Activated CD4-positive, alpha-beta memory T cell treated with anti-CD3 and anti-CD28 coated beads, Interleukin-2, amount 10 ng/mL, durations not matched to agents 7 days and 5 days (primary cell): ENCODE measurements at regions of chr11 and their contacts with region 1.

Region 1: DNA sequence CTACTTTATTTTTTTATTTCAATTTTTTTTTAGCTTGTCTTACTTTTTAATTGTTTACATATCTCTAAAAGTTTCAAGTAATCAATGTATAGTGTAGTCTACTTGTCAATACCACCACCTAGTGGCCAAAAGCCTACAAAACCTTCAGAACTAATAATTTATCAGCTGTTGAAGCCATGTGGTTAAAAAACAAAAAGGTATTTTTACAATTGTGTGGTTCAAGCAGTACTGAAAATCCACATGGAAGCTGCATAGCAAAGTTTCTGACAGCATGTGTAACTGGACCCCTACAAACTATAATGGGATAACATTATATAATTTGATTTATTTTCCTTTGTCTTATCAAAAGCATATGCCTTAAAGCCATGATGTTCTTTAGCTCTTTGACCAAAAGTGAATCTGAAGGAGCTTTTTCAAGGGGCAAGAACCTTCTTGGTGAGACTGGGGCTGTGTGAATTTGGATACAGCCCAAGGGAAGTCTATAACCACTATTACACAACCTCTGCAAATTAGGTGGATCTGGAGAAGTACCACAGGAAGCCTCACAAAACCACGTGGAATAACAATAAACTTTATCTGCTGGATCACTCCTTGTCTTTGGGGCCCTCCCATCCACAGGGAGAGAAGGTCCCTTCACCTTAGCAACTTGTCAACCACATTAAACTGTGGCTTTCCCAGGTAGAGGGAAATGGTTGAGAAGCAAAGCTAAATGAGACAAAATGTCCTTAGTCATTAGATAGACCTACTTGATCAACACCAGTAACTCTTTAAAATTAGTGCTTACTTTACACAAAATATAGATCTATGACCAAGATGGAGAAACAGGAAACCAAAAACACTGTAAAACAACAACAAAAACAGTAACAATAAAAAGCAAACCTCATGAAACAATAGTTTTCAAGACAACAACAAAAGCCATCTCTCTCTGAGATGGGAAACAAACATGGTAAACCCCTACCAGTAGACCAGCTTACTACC is 9.9 kb downstream of the NARS2 start:
- DNase-seq: peak; percentile 44
- H3K4me3 Mint-ChIP-seq: no peak overlapping the region
- H3K27ac Mint-ChIP-seq: peak overlapping the region; percentile 71
- H3K4me1 Mint-ChIP-seq: peaks cover 50% of the 10 kb centered on the region
- H3K27me3 Mint-ChIP-seq: no peaks in the 10 kb centered on the region

Region 2: DNA sequence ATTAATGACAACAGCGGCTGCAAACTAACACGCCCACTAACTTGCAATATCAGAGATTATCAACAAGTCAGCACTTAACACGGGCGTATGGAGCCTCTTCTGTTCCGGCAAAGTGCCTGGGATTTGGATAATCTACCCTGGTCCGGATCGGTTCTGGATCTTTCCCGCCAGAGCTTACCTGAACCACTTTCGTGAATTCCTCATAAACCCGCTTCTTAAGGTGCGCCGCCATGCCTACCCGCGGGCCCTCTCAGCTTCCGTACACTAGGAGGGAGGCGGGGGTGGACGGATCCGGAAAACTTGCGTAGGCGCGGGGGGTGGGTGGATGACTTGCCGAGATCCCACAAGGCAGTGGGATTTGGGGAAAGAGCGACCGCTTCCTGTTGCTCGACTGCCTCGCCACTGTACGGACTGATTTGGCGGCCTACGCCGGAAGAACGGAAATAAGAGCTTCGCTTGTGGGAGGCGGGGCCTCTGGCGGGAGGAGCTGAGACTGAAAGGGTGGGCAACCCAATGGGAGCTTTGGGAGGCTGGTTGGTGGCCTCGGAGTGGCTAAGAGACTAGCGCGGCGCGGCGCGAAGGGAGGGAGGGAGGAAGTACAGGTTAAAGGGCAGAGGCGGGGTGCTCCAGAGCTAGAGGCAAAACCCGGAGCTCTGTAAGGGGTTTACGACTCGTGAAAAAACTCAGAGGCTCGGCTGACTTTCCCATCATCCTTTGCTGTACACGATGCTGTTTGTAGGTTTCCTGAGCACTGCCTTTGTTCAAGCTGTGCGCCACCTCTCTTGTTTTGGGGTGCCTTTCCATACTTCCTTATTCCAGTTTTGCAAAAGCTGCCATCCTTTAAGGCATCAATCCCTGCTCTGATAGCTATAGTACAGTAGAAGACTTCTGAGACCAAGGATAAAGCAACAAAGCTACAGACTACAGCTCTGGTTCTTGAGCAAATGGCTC is 570.1 kb before region 1 on chr11 and contains the start of gene INTS4:
- CTCF ChIA-PET with region 1: interaction called, 13 read pairs
- POLR2A ChIA-PET with region 1: no interaction called
- DNase-seq: peak; percentile 99
- H3K4me3 Mint-ChIP-seq: peak within 1 kb of the TSS; percentile 92
- H3K27ac Mint-ChIP-seq: peak within 1 kb of the TSS; percentile 82
- H3K4me1 Mint-ChIP-seq: peaks cover 29% of the 10 kb centered on the region
- H3K27me3 Mint-ChIP-seq: no peaks in the 10 kb centered on the region
- total RNA-seq, gene INTS4: 51.2 to 52.0 TPM

Region 3: DNA sequence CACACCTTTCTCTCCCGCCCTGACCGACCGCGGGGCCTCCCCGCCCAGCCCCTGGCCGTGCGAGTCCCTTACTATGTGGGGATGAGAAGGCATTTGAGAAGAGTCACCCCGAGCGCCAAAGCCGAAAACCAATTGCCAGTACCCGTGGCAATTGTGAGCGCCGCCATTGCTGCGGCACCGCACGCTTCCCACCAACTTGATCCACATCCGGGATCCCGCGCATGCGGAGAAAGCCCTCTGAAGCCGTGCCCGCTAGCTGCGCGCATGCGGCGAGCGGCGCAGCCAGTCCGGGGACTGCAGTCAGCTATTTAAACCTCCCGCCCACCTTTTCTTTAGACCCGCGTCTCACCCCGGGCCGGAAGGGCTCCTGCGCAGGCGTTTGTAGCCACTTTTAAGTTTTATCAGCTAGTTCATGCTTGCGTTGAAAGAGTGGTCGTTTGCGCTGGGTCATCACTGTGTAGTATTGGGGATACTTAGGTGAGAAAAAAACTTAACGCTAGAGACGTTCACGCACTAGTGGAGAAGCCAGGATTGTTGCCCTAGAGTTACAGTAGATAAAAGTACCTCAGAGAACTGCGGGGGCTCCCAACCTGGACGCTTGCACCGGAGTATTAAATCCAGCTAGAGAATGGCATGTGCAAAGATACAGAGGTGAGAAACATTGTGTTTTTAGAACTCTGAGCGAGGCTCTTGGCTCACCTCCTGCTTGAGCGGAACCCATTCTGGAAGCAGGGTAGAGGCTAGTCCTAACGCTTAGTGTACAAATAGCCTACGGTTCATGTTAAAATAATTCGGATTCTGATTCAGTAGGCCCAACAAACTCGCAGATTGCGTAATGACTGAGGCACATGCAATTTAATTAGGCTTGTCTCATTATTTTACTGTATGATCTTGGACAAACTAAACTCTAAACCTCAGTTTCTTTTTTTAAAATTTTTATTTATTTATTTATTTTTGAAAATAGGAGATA is 425.1 kb before region 1 on chr11 and contains the start of gene ALG8:
- CTCF ChIA-PET with region 1: interaction called, 20 read pairs
- POLR2A ChIA-PET with region 1: interaction called, 17 read pairs
- DNase-seq: peak; percentile 96
- H3K4me3 Mint-ChIP-seq: peak within 1 kb of the TSS; percentile 85
- H3K27ac Mint-ChIP-seq: peak within 1 kb of the TSS; percentile 91
- H3K4me1 Mint-ChIP-seq: peaks cover 52% of the 10 kb centered on the region
- H3K27me3 Mint-ChIP-seq: no peaks in the 10 kb centered on the region
- total RNA-seq, gene ALG8: 40.2 to 48.1 TPM

Region 4: GRCh38 chr11:78228467-78228866 is 336.3 kb before region 1 on chr11:
- CTCF ChIA-PET with region 1: interaction called, 36 read pairs
- POLR2A ChIA-PET with region 1: interaction called, 7 read pairs
- DNase-seq: peak; percentile 25
- H3K4me3 Mint-ChIP-seq: no peak overlapping the region
- H3K27ac Mint-ChIP-seq: no peak overlapping the region
- H3K4me1 Mint-ChIP-seq: peaks cover 58% of the 10 kb centered on the region
- H3K27me3 Mint-ChIP-seq: no peaks in the 10 kb centered on the region

Region 5: GRCh38 chr11:78465169-78465942 is 99.4 kb before region 1 on chr11:
- CTCF ChIA-PET with region 1: interaction called, 12 read pairs
- POLR2A ChIA-PET with region 1: interaction called, 6 read pairs
- DNase-seq: peak; percentile 65
- H3K4me3 Mint-ChIP-seq: peak overlapping the region; percentile 72
- H3K27ac Mint-ChIP-seq: peak overlapping the region; percentile 97
- H3K4me1 Mint-ChIP-seq: peaks cover 45% of the 10 kb centered on the region
- H3K27me3 Mint-ChIP-seq: no peaks in the 10 kb centered on the region